Astrocyte of the spinal cord (primary cell): ENCODE measurements at regions of chr1 and their contacts with region 1.

Region 1: GRCh38 chr1:21334214-21335087 is 44.2 kb upstream of the ECE1 start:
- DNase-seq: peak; percentile 92
- H3K4me3 ChIP-seq: peak overlapping the region; percentile 6
- CTCF ChIP-seq: peak; percentile 94

Region 2: GRCh38 chr1:21232044-21232443 is 102.4 kb before region 1 on chr1:
- in situ Hi-C with region 1: loop called (anchors 25 kb)
- DNase-seq: peak; percentile 50
- H3K4me3 ChIP-seq: no peak overlapping the region
- CTCF ChIP-seq: peak; percentile 70